Adrenal gland (tissue), 19 donors: ENCODE measurements at regions of chr13 and their contacts with region 1.

Region 1: DNA sequence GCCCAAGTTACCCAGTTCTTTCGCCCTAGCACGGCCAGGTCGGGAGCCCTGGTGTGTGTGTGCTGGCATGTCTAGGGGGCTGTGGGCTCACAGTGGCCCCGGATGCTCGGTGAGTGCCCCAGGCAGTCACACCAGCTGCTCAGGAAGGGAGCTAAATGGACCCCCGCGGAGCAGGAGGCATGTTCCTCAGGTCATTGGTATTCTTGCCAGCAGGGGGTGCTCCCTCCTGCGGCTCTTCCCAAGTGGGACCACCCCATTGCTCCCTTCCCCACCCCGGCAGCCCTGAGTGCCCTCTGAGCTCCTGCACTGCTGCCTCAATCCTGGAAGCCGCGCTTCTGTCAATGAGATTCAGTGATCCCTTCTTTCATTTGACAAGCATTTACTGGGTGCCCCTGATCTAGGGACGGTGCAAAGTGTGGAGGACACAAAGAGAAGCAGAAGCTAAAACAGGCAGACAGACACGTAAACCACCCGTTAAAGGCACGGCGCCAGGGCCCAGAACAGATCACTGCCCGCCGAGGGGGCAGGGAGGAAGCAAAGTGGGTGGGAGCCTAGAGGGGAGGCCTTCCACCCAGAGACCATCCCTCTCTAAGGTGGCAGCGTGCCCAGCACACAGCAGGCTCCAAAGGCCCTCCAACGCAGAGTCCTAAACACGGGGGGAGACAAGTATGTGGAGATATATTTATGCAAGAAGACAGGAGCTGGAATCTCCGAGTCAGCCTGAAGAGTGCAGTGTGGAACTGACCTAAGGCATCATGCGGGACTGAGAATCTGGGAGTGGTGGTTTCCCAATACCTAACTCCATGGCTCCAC is 5.2 kb upstream of the ADPRHL1 start:
- DNase-seq: peak in 1 of 7 donors; percentile 19
- H3K4me3 ChIP-seq: no peak overlapping the region
- H3K27ac ChIP-seq: no peak overlapping the region
- H3K4me1 ChIP-seq: no peaks in the 10 kb centered on the region
- H3K27me3 ChIP-seq: no peaks in the 10 kb centered on the region
- CTCF ChIP-seq: peak in 5 of 6 experiments; percentile 10 to 36 (median 30)
- POLR2A ChIP-seq: no peak

Region 2: DNA sequence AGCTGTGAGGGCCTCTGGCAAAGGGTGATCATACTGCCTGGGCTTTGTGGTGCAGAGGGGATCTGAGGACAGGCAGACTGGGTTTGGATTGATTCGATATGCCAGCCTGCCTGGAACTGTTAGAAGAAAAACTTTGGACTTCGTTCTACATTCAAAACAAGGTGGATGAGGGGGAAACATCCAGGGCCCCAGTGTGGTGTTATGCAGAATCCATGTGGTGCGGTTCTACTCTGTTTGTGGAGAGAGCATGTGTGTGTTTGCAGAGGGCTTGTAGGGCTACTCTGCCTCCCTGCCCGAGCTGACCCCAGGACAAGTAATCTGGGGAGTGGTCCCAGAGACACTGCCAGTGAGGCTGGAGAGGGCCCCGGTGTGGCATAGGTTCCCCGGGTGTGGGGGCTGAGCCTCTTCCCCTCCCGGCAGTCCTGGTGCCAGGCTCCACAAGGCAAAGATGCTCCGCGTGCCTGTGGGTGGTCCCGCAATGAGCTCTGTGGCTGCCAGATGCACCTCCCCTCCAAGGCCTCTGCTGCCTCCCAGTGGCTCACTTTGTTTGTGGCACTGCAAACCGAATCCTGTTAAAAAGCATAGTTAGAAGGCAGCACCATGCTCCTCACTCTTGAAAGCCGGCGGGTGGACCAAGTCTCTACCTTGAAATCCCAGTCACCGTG is 103.8 kb after region 1 on chr13:
- intact Hi-C with region 1: loop called in 1 of 2 experiments (anchors 10 kb)
- DNase-seq: peak; percentile 53 to 82 (median 60)
- H3K4me3 ChIP-seq: no peak overlapping the region
- H3K27ac ChIP-seq: no peak overlapping the region
- H3K4me1 ChIP-seq: no peaks in the 10 kb centered on the region
- H3K27me3 ChIP-seq: no peaks in the 10 kb centered on the region
- CTCF ChIP-seq: peak; percentile 51 to 72 (median 64)
- POLR2A ChIP-seq: no peak